AG04449 (cell line): ENCODE measurements at regions of chr11 and their contacts with region 1.

Region 1: GRCh38 chr11:65111744-65112414 is at the start of gene TM7SF2:
- DNase-seq: no peak
- H3K4me3 ChIP-seq: peak within 1 kb of the TSS; percentile 54
- CTCF ChIP-seq: no peak

Region 2: DNA sequence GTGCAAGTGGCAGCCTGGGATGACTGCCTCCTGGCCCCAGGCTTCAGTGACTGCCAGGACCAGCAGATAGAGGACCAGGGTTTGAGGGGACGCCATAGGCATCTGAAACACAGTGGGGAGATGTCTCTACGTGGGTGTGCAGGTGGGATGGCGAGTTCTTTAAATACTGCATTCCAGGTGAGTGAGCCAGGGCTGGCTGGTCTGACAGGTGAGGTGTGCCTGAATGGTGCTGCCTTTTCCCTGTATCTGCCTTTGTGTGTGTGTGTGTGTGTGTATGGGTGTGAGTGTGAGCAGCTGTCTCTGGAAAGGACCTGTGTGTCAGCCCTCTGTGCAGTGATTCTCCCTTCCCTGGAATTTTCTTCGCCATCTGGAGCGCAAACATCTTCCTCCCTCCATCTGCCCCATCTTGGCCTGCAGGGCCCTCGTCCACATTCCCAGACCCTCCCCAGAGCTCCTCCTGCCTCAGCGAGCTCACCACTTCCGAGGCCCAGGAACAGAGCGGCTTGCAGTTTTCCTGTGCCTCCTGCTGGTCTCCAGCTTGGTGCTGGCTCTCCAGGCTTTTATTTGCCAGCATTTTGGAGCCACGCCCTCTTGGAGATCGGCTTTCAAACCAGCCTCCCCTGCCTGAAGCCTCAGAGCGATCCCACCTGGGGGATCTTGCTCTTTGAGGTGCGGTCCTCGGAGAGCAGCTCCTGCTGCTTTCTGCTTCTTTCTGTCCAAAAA is 176.4 kb before region 1 on chr11 and contains the start of gene GPHA2:
- CTCF ChIA-PET with region 1: no interaction called
- POLR2A ChIA-PET with region 1: no interaction called
- DNase-seq: no peak
- H3K4me3 ChIP-seq: no peak within 1 kb of the TSS
- CTCF ChIP-seq: peak; percentile 13

Region 3: DNA sequence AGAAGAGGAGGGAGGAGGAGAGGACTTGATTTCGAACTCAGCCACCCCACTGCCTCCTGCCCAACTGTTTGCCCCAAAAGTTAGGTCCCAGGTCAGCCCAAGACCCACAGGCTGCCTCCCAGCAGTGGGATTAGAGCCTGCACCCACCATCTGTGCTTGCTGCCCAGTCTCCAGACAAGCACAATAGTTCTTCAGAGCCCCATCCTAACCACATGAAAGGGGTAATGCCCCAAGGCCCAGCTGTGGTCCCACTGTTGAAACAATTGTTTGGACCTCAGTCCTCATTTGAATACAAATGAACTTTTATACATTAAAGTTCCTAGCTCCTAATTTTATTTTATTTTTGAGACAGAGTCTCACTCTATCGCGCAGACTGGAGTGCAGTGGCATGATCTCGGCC is 21.3 kb before region 1 on chr11:
- CTCF ChIA-PET with region 1: interaction called, 169 read pairs
- POLR2A ChIA-PET with region 1: interaction called, 5 read pairs
- DNase-seq: no peak
- H3K4me3 ChIP-seq: no peak overlapping the region
- CTCF ChIP-seq: no peak

Region 4: GRCh38 chr11:65095974-65096806 is 15.7 kb before region 1 on chr11 and contains the start of gene VPS51:
- CTCF ChIA-PET with region 1: interaction called, 169 read pairs
- POLR2A ChIA-PET with region 1: interaction called, 8 read pairs
- DNase-seq: no peak
- H3K4me3 ChIP-seq: peak within 1 kb of the TSS; percentile 76
- CTCF ChIP-seq: no peak

Region 5: DNA sequence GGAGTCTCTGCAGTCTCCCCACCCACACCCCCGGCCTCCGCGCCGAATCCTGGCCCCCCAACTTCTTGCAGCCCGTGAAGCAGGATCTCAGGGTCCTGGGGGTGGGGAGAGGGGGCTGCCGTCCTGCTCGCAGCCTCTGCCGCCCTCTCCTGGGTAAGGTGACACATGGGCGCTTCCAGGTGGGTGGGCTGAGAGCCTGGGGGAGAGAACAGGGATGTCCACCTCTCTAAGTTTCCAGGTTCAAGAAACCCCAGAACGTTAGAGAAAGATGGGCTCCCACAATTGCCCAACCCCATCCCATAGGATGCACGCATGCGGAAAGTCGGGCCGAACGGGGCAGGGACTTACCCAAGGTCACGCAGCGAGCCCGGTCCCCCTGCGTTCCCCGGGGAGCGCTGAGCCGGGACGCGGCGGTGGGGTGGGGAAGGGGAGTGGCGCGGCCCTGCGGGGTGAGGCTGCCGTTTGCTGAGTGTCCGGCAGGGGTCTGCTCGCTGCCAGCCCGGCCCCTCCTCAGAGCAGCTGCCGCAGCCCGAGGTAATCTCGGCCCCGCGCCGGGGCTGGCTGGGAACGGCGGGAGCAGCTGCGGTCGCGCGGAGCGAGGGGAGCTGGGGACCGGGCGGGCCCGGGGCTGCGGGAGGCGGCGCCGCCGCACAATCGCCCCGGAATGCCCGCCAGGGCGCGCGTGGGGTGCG is 69.1 kb after region 1 on chr11:
- CTCF ChIA-PET with region 1: interaction called, 13 read pairs
- POLR2A ChIA-PET with region 1: no interaction called
- DNase-seq: no peak
- H3K4me3 ChIP-seq: peak overlapping the region; percentile 86
- CTCF ChIP-seq: peak; percentile 76